ENCODE measurements at regions of chr19 and their contacts with region 1.

Region 1: GRCh38 chr19:11924886-11925650 is at the start of gene ZNF700:
- DNase-seq: peak; percentile 95
- H3K4me3 Mint-ChIP-seq: peak within 1 kb of the TSS; percentile 95
- H3K27ac Mint-ChIP-seq: peak within 1 kb of the TSS; percentile 98
- H3K4me1 Mint-ChIP-seq: peaks cover 37% of the 10 kb centered on the region
- H3K27me3 Mint-ChIP-seq: no peaks in the 10 kb centered on the region
- total RNA-seq, gene ZNF700: 19.1 to 20.4 TPM

Region 2: GRCh38 chr19:11798391-11799330 is 126.4 kb before region 1 on chr19 and contains the start of gene ZNF491:
- CTCF ChIA-PET with region 1: interaction called, 17 read pairs
- POLR2A ChIA-PET with region 1: no interaction called
- DNase-seq: peak; percentile 83
- H3K4me3 Mint-ChIP-seq: peak within 1 kb of the TSS; percentile 79
- H3K27ac Mint-ChIP-seq: peak within 1 kb of the TSS; percentile 54
- H3K4me1 Mint-ChIP-seq: peaks cover 15% of the 10 kb centered on the region
- H3K27me3 Mint-ChIP-seq: peaks cover 3% of the 10 kb centered on the region
- total RNA-seq, gene ZNF491: 0.80 to 0.98 TPM

Region 3: GRCh38 chr19:11856596-11857250 is 68.3 kb before region 1 on chr19:
- CTCF ChIA-PET with region 1: no interaction called
- POLR2A ChIA-PET with region 1: no interaction called
- DNase-seq: no peak
- H3K4me3 Mint-ChIP-seq: no peak overlapping the region
- H3K27ac Mint-ChIP-seq: no peak overlapping the region
- H3K4me1 Mint-ChIP-seq: no peaks in the 10 kb centered on the region
- H3K27me3 Mint-ChIP-seq: no peaks in the 10 kb centered on the region

Region 4: GRCh38 chr19:11887611-11888531 is 37.2 kb before region 1 on chr19 and contains the start of gene ZNF69:
- CTCF ChIA-PET with region 1: interaction called, 13 read pairs
- POLR2A ChIA-PET with region 1: interaction called, 11 read pairs
- DNase-seq: peak; percentile 53
- H3K4me3 Mint-ChIP-seq: peak within 1 kb of the TSS; percentile 83
- H3K27ac Mint-ChIP-seq: peak within 1 kb of the TSS; percentile 73
- H3K4me1 Mint-ChIP-seq: peaks cover 21% of the 10 kb centered on the region
- H3K27me3 Mint-ChIP-seq: no peaks in the 10 kb centered on the region
- total RNA-seq, gene ZNF69: 2.3 to 2.7 TPM

Region 5: DNA sequence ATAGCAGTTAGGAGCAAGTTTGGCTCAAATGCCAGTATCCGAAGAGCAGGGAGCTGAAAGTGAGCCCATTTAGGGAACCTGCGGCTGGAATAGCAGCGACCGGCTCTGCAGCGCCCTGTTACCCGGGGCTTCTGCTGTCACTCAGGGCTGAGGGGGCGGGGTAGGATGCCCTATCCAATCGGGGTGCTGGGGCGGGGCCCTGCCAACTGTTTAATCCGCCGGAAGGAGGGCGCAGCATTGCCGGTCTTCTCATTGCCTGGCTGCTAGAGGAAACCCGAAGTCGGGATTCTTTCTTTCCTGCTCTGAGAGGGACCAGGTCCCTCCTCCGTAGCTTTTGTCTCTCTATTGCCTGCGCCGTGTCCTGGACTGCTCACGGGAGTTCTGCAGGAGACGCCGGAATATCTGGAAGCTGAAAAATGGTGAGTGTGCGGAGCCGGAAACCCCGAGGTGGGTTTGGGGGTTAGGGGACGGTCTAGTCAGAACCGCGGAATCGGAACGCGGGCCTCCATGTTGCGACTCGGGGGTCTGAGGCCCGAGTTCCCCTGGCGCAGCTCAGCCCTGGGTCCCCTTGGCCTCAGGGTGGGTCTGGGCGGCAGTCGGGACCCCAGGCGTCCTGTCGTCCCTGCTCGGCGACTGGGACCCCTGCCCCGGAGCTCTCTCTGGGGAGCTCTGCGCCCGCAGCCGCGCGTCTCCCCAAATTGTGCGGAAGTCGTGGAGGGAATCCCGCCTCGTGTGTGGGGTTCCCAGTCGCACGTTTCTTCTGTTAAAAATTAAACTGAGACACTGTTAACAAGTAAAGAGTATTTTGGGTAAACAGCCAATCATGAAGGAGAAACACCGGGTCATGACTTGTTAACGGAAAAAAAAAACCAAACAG is 62.6 kb after region 1 on chr19:
- CTCF ChIA-PET with region 1: interaction called, 84 read pairs
- POLR2A ChIA-PET with region 1: interaction called, 79 read pairs
- DNase-seq: peak; percentile 94
- H3K4me3 Mint-ChIP-seq: peak overlapping the region; percentile 94
- H3K27ac Mint-ChIP-seq: peak overlapping the region; percentile 98
- H3K4me1 Mint-ChIP-seq: peaks cover 20% of the 10 kb centered on the region
- H3K27me3 Mint-ChIP-seq: no peaks in the 10 kb centered on the region

Region 6: DNA sequence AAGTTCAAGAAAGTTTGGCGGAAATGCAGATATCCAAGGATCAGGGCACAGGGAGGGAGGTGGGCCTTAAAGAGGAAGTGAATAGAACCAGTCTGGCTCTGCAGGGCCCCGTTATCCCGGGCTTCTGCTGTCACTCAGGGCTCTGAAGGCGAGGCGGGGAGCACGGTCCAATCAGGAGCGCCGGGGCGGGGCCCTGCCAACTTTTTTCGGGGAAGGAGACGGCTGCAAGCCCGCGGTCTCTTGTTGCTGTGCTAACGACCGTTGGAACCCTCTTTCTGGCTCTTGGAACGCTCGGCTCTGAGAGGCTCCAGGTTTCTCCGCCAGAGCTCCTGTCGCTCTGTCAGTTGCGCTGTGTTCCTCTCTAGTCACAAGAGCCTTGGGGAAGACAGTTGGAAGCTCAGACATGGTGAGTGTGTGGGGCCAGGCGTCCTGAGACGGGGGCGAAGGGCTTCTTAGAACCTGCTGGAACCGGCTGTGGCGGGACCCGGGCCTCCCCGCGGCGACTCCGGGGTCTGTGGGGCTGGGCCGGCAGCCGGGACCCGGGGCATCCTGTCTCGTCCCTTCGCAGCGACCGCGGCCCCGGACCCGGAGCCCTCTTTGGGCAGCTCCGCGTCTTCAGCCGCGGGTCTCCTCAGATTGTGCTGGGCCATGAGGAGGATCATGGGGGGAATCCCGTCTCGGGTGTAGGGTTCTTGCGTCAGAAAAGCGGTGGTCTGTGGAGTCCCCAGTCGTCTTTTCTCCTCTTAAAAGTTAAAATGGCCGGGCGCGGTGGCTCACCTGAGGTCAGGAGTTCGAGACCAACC is 167.2 kb after region 1 on chr19:
- CTCF ChIA-PET with region 1: interaction called, 14 read pairs
- POLR2A ChIA-PET with region 1: interaction called, 6 read pairs
- DNase-seq: peak; percentile 69
- H3K4me3 Mint-ChIP-seq: peak overlapping the region; percentile 73
- H3K27ac Mint-ChIP-seq: peak overlapping the region; percentile 60
- H3K4me1 Mint-ChIP-seq: peaks cover 12% of the 10 kb centered on the region
- H3K27me3 Mint-ChIP-seq: peaks cover 1% of the 10 kb centered on the region

Region 7: GRCh38 chr19:12162882-12163806 is 238.1 kb after region 1 on chr19 and contains the start of gene ZNF136:
- CTCF ChIA-PET with region 1: interaction called, 12 read pairs
- POLR2A ChIA-PET with region 1: interaction called, 8 read pairs
- DNase-seq: peak; percentile 96
- H3K4me3 Mint-ChIP-seq: peak within 1 kb of the TSS; percentile 90
- H3K27ac Mint-ChIP-seq: peak within 1 kb of the TSS; percentile 90
- H3K4me1 Mint-ChIP-seq: peaks cover 33% of the 10 kb centered on the region
- H3K27me3 Mint-ChIP-seq: no peaks in the 10 kb centered on the region
- total RNA-seq, gene ZNF136: 11.0 TPM

Measured in activated CD4-positive, alpha-beta memory T cell treated with anti-CD3 and anti-CD28 coated beads, Interleukin-2, amount 10 ng/mL, durations not matched to agents 7 days and 5 days (primary cell).